ENCODE measurements at regions of chr1 and their contacts with region 1.

Region 1: DNA sequence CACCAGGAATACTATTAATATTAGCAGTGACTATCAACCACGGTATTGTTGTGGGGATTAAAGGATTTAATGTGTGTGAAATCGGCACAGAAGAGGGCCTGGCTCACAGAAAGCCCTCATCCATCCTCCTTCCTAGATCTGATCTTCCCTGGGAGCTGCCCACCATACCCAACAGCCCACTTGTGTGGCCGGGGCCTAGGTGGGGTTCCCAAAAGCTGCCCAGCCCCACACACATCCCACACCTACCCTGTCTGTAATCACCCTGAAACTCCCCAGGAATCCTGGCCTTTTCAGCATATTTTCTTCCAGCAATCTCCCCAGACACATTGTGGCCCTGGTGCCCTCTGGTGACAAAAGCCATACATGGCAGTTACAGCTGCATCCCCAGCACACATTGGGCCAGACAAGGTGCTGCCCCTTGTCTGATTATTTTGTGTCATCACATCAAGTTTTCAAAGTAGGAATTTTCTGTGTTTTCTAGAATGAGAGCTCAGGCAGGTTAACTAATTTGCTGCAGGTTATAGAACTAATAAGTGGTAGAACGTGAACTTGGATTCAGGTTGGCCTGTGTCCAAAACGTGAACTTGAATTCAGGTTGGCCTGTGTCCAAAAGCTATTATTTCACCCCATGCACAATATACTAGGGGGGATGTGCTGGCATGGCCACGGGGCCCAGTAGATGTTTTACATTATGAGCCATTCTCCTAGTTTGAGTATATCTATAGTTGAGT is 5.3 kb upstream of the SLC6A9 start:
- DNase-seq: peak; percentile 46 to 82
- ATAC-seq: peak; percentile 73 to 88 (median 81)
- H3K4me3 ChIP-seq: no peak overlapping the region
- H3K4me3 Mint-ChIP-seq: no peak overlapping the region
- H3K27ac ChIP-seq: no peak overlapping the region
- H3K27ac Mint-ChIP-seq: no peak overlapping the region
- H3K4me1 ChIP-seq: peaks cover under 1% of the 10 kb centered on the region
- H3K4me1 Mint-ChIP-seq: peaks cover 0 to 2% of the 10 kb centered on the region in 2 donors
- H3K27me3 ChIP-seq: no peaks in the 10 kb centered on the region
- H3K27me3 Mint-ChIP-seq: peaks cover 4 to 6% of the 10 kb centered on the region in 2 donors
- CTCF ChIP-seq: peak; percentile 74

Region 2: GRCh38 chr1:43529206-43529731 is 507.3 kb before region 1 on chr1:
- intact Hi-C with region 1: loop called (anchors 1 kb)
- DNase-seq: peak; percentile 75 to 89
- ATAC-seq: peak; percentile 66 to 73 (median 67)
- H3K4me3 ChIP-seq: no peak overlapping the region
- H3K4me3 Mint-ChIP-seq: peak overlapping the region; percentile 22
- H3K27ac ChIP-seq: no peak overlapping the region
- H3K27ac Mint-ChIP-seq: no peak overlapping the region
- H3K4me1 ChIP-seq: peaks cover 13% of the 10 kb centered on the region
- H3K4me1 Mint-ChIP-seq: peaks cover 15 to 32% of the 10 kb centered on the region in 2 donors
- H3K27me3 ChIP-seq: peaks cover 20% of the 10 kb centered on the region
- H3K27me3 Mint-ChIP-seq: peaks cover 47 to 57% of the 10 kb centered on the region in 2 donors
- CTCF ChIP-seq: peak; percentile 96

Region 3: GRCh38 chr1:43763497-43763973 is 273.0 kb before region 1 on chr1:
- intact Hi-C with region 1: loop called (anchors 1 kb)
- DNase-seq: peak in 1 of 2 donors; percentile 73
- ATAC-seq: peak; percentile 73 to 84 (median 77)
- H3K4me3 ChIP-seq: no peak overlapping the region
- H3K4me3 Mint-ChIP-seq: no peak overlapping the region
- H3K27ac ChIP-seq: no peak overlapping the region
- H3K27ac Mint-ChIP-seq: no peak overlapping the region
- H3K4me1 ChIP-seq: no peaks in the 10 kb centered on the region
- H3K4me1 Mint-ChIP-seq: peaks cover 5 to 6% of the 10 kb centered on the region in 2 donors
- H3K27me3 ChIP-seq: no peaks in the 10 kb centered on the region
- H3K27me3 Mint-ChIP-seq: no peaks in the 10 kb centered on the region
- CTCF ChIP-seq: peak; percentile 62

Region 4: DNA sequence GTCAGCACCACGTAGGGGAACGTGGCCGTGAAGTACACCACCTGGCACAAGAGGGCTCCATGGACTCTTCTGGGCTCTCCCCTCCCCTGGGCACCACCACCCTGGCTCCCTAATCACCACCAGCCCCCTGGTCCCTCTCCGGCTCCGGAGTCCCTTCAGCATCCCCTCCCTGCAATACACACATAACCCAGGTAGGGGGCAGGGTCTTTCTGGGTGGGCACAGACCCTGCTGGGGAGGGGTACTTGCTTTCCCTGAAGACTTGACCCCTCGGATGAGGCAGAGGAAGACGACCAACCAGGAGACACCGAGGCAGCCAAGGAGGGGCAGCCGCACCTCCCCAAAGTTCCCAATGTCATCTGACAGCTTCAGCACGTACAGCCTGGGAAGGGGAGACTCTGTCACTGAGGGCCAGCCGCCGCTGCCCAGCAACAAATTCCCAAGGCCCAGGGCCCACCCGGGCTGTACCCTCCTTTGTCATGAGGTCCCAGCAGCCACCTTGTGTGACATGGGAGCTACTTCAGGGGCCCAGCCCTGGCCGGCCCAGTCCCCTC is 33.9 kb before region 1 on chr1:
- intact Hi-C with region 1: loop called (anchors 1 kb)
- DNase-seq: no peak
- ATAC-seq: no peak
- H3K4me3 ChIP-seq: no peak overlapping the region
- H3K4me3 Mint-ChIP-seq: no peak overlapping the region
- H3K27ac ChIP-seq: no peak overlapping the region
- H3K27ac Mint-ChIP-seq: no peak overlapping the region
- H3K4me1 ChIP-seq: no peaks in the 10 kb centered on the region
- H3K4me1 Mint-ChIP-seq: no peaks in the 10 kb centered on the region
- H3K27me3 ChIP-seq: no peaks in the 10 kb centered on the region
- H3K27me3 Mint-ChIP-seq: no peaks in the 10 kb centered on the region
- CTCF ChIP-seq: no peak